AG04450 (cell line): ENCODE measurements at regions of chr6 and their contacts with region 1.

Region 1: GRCh38 chr6:134063966-134064445 is 11.6 kb upstream of the SLC2A12 start:
- DNase-seq: peak; percentile 68
- H3K4me3 ChIP-seq: no peak overlapping the region
- H3K27ac ChIP-seq: no peak overlapping the region
- H3K27me3 ChIP-seq: no peaks in the 10 kb centered on the region
- CTCF ChIP-seq: peak; percentile 98

Region 2: DNA sequence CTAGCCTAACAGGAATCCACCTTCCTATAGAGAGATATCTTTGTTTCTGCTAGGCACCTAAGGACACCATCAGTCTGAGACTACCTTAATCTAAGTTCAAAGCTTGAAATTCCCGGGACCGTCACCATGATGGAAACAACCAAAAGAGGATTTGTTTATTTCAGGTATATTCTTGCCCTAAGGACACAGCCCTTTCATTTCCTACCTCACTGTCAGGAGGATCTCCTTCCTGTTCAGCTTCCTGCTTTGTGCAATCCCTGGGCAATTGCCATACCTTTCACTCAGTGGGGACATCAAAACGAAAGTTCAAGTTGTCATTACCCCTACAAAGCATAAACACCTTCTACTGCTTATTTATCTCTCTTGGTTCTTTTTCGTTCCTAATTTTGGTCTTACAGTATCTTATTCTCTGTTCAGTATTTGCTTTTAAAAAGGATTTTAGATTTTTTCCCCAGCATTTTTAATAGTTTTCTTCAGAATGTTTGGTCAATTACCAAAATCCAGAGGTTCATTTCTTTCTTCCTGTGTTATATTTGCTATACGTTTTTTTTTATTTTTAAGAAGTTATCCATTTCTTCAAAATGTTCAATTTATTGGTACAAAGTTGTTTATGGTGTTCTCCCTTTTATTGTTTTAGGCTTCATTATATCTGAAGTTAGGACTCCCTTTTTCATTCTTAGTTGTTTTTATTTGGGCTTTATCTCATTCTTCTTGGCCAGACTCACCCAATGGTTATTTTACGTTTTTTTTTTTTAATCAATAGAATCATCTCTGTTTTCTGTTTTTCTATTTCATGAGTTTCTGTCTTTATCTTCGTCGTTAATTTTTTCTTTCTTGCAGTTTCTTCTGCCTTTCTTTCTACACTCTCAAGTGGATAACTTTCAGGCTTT is 124.0 kb before region 1 on chr6:
- CTCF ChIA-PET with region 1: interaction called, 11 read pairs
- POLR2A ChIA-PET with region 1: no interaction called
- DNase-seq: no peak
- H3K4me3 ChIP-seq: no peak overlapping the region
- H3K27ac ChIP-seq: no peak overlapping the region
- H3K27me3 ChIP-seq: no peaks in the 10 kb centered on the region
- CTCF ChIP-seq: no peak

Region 3: GRCh38 chr6:133966654-133967329 is 97.2 kb before region 1 on chr6:
- CTCF ChIA-PET with region 1: interaction called, 27 read pairs
- POLR2A ChIA-PET with region 1: no interaction called
- DNase-seq: no peak
- H3K4me3 ChIP-seq: no peak overlapping the region
- H3K27ac ChIP-seq: no peak overlapping the region
- H3K27me3 ChIP-seq: no peaks in the 10 kb centered on the region
- CTCF ChIP-seq: no peak

Region 4: GRCh38 chr6:133991096-133991593 is 72.9 kb before region 1 on chr6:
- CTCF ChIA-PET with region 1: interaction called, 21 read pairs
- POLR2A ChIA-PET with region 1: no interaction called
- DNase-seq: peak; percentile 61
- H3K4me3 ChIP-seq: no peak overlapping the region
- H3K27ac ChIP-seq: peak overlapping the region; percentile 53
- H3K27me3 ChIP-seq: no peaks in the 10 kb centered on the region
- CTCF ChIP-seq: no peak

Region 5: GRCh38 chr6:134031696-134032255 is 32.2 kb before region 1 on chr6:
- CTCF ChIA-PET with region 1: interaction called, 26 read pairs
- POLR2A ChIA-PET with region 1: no interaction called
- DNase-seq: no peak
- H3K4me3 ChIP-seq: no peak overlapping the region
- H3K27ac ChIP-seq: no peak overlapping the region
- H3K27me3 ChIP-seq: no peaks in the 10 kb centered on the region
- CTCF ChIP-seq: no peak

Region 6: DNA sequence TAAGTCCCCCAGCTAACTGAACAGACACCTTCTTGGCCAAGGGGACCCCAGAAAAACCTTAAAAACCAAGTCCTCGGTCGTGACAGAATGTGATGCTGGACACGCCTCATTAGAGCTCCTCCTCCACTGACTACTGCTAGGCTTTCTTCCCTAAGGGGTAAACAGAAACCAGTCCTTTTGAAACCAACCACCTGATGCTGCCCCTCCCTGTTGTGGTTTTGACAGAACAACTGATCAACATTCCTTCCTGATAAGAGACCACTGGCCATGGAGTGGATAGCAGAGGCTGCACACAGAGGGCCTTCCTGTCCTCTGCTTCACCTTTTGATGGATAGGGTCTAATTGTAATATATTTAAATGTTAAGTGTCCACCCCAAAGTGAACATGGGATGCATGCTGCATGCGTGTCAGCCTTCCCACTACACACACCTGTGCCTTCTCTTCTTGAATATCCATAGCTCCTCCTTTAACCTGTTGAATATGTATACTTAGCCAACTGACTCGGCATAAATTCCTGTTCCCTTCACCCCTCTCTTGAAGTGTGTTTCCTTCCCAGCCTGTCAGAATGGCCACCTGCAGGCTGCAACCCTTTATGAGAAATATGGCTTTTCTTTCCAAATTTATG is 16.3 kb after region 1 on chr6:
- CTCF ChIA-PET with region 1: interaction called, 21 read pairs
- POLR2A ChIA-PET with region 1: no interaction called
- DNase-seq: no peak
- H3K4me3 ChIP-seq: no peak overlapping the region
- H3K27ac ChIP-seq: no peak overlapping the region
- H3K27me3 ChIP-seq: peaks cover 6% of the 10 kb centered on the region
- CTCF ChIP-seq: no peak